ENCODE measurements at regions of chr12 and their contacts with region 1.

Region 1: GRCh38 chr12:68317047-68317667 is 15.0 kb downstream of the MDM1 start:
- DNase-seq: peak in 5 of 7 donors; percentile 21 to 62 (median 50)
- H3K4me3 ChIP-seq: no peak overlapping the region
- H3K27ac ChIP-seq: no peak overlapping the region
- H3K4me1 ChIP-seq: no peaks in the 10 kb centered on the region
- H3K27me3 ChIP-seq: no peaks in the 10 kb centered on the region
- CTCF ChIP-seq: peak; percentile 56 to 87 (median 64)
- POLR2A ChIP-seq: no peak

Region 2: GRCh38 chr12:68223083-68223747 is 93.9 kb before region 1 on chr12:
- intact Hi-C with region 1: loop called in 1 of 2 experiments (anchors 5 kb)
- DNase-seq: peak; percentile 74 to 91 (median 85)
- H3K4me3 ChIP-seq: no peak overlapping the region
- H3K27ac ChIP-seq: no peak overlapping the region
- H3K4me1 ChIP-seq: no peaks in the 10 kb centered on the region
- H3K27me3 ChIP-seq: peaks cover 12% of the 10 kb centered on the region
- CTCF ChIP-seq: peak; percentile 66 to 94 (median 88)
- POLR2A ChIP-seq: no peak

Region 3: DNA sequence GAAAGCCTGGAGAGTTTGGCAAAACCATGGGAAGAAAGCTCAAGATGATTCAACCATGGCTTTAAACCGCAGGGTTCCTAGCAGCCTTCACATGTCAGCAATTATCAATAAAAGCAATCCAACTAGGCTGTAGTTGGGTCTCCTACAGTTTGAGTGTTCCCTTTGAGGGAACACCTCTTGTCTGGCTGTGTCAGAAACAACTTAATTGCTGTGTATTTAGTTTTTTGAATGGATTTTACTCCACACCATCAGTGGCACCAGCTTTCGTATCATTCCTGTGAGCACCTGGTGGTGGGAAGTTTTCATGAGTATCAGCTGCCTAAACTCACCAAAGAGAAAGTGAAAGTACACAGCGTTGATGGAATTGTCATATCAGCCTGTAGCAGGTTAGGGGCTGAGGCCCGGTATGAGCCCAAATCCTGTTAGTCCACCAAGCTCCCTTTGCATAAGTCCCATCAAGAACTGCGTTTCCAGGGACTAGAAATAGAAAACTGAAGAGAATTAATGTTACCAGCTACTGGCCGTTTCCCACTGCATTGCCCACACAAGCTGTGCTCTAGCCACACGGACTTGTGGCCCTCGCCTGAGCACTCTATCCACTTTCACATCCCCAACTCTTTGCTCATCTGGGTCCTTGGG is 80.6 kb before region 1 on chr12:
- intact Hi-C with region 1: loop called in 1 of 2 experiments (anchors 10 kb)
- DNase-seq: no peak
- H3K4me3 ChIP-seq: peak overlapping the region in 2 of 4 donors; percentile 22 to 45
- H3K27ac ChIP-seq: peak overlapping the region in 1 of 5 donors; percentile 7
- H3K4me1 ChIP-seq: peaks cover 0 to 10% of the 10 kb centered on the region in 2 donors
- H3K27me3 ChIP-seq: no peaks in the 10 kb centered on the region
- CTCF ChIP-seq: peak in 1 of 6 experiments; percentile 11
- POLR2A ChIP-seq: no peak

Region 4: GRCh38 chr12:68420225-68421010 is 103.3 kb after region 1 on chr12:
- intact Hi-C with region 1: no loop called
- DNase-seq: peak; percentile 33 to 72 (median 52)
- H3K4me3 ChIP-seq: peak overlapping the region in 1 of 4 donors; percentile 12
- H3K27ac ChIP-seq: peak overlapping the region; percentile 21 to 80 (median 61)
- H3K4me1 ChIP-seq: peaks cover 13 to 16% of the 10 kb centered on the region in 2 donors
- H3K27me3 ChIP-seq: no peaks in the 10 kb centered on the region
- CTCF ChIP-seq: no peak
- POLR2A ChIP-seq: no peak

Region 5: GRCh38 chr12:68530965-68531364 is 213.8 kb after region 1 on chr12:
- intact Hi-C with region 1: no loop called
- DNase-seq: peak in 2 of 7 donors; percentile 7 to 24
- H3K4me3 ChIP-seq: no peak overlapping the region
- H3K27ac ChIP-seq: no peak overlapping the region
- H3K4me1 ChIP-seq: no peaks in the 10 kb centered on the region
- H3K27me3 ChIP-seq: no peaks in the 10 kb centered on the region
- CTCF ChIP-seq: no peak
- POLR2A ChIP-seq: no peak